Panc1 (cell line): ENCODE measurements at regions of chr15 and their contacts with region 1.

Region 1: GRCh38 chr15:77709135-77709886 is 76.6 kb upstream of the LINGO1 start:
- DNase-seq: no peak
- ATAC-seq: peak; percentile 29; the same call in 1 of the 2 replicates
- H3K4me3 ChIP-seq: no peak overlapping the region
- H3K27ac ChIP-seq: no peak overlapping the region
- H3K4me1 ChIP-seq: no peaks in the 10 kb centered on the region
- H3K27me3 ChIP-seq: no peaks in the 10 kb centered on the region
- CTCF ChIP-seq: no peak

Region 2: GRCh38 chr15:77266708-77267386 is 442.5 kb before region 1 on chr15:
- CTCF ChIA-PET with region 1: no interaction called
- POLR2A ChIA-PET with region 1: no interaction called
- in situ Hi-C with region 1: no loop called
- intact Hi-C with region 1: no loop called
- DNase-seq: no peak
- ATAC-seq: peak; percentile 99
- H3K4me3 ChIP-seq: no peak overlapping the region
- H3K27ac ChIP-seq: 0 out of 2 replicates have a peak overlapping the region, but pooled peaks have one; percentile 42
- H3K4me1 ChIP-seq: peaks cover 15% of the 10 kb centered on the region; the same call in 1 of the 2 replicates
- H3K27me3 ChIP-seq: no peaks in the 10 kb centered on the region
- CTCF ChIP-seq: no peak

Region 3: DNA sequence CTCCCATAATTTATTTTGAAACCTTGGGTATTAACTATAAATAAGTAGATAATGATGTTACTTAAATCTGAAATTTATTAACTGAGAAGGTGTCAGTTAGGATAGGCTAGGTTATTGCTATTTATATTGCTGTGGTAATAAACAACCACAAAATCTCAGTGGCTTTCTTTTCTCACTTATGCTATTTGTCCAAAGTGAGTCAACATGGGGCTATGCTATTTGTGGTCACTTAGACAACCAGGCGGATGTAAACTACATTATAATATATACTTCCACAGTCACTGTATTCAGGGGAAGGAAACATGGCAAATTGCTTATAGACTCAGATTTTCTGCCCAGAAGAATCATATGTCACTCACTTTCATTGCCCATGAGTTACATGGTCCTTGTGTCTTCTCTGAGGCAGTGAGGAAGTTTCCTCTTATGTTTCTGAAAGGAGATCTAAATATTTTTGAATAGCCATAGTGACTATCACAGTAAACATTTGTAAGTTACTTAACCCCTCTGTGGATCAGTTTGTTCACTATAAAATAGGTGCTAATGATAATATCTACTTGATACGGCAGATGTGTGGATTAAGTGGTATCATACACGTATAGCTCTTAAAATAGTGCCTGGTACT is 268.8 kb before region 1 on chr15:
- CTCF ChIA-PET with region 1: no interaction called
- POLR2A ChIA-PET with region 1: interaction called, 13 read pairs
- in situ Hi-C with region 1: no loop called
- intact Hi-C with region 1: no loop called
- DNase-seq: no peak
- ATAC-seq: peak; percentile 89
- H3K4me3 ChIP-seq: no peak overlapping the region
- H3K27ac ChIP-seq: no peak overlapping the region
- H3K4me1 ChIP-seq: peaks cover 19% of the 10 kb centered on the region; the same call in 1 of the 2 replicates
- H3K27me3 ChIP-seq: no peaks in the 10 kb centered on the region
- CTCF ChIP-seq: no peak

Region 4: DNA sequence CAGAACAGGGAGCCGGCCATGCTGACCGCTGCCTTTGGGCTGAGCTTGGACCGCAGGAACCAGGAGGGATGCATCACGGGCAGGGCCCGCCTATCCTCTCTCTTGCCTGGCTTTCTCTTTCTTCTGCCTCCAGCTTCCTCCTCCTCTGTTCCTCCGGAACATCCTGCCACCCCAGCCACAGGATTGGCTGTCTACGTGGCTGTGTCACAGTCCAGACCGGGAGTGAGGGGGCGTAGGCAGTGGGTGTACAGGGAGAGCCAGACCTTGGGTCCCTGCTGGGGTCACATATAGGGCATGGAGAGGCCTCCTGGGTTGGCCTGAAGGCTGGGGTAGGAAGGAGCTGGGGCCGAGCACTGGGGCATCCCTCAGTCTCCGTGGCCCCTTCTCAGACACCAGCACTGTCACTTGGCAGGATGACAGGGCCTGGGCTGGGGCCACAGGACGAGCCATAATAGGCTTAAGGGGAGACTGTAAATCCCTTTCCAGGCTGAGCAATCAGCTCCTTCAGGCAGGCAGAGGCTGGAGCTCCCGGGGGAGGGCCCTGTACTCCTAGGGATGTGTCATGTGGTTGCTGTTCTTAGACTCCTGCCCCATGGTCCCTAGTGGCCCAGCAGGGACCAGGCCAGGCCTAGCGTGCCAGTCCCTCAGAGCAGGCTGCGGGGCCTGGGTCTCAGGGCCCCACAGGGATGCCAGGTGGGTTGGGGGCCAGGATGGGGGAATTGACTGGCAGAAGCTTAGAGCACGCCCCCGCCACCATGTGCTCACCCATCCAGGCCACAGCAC is 102.0 kb before region 1 on chr15:
- CTCF ChIA-PET with region 1: no interaction called
- POLR2A ChIA-PET with region 1: no interaction called
- in situ Hi-C with region 1: no loop called
- intact Hi-C with region 1: no loop called
- DNase-seq: no peak
- ATAC-seq: peak; percentile 24; the same call in 1 of the 2 replicates
- H3K4me3 ChIP-seq: no peak overlapping the region
- H3K27ac ChIP-seq: peak overlapping the region; percentile 51; the same call in 1 of the 2 replicates
- H3K4me1 ChIP-seq: peaks cover 31% of the 10 kb centered on the region; the same call in 1 of the 2 replicates
- H3K27me3 ChIP-seq: no peaks in the 10 kb centered on the region
- CTCF ChIP-seq: no peak

Region 5: GRCh38 chr15:77786181-77786890 is 77.0 kb after region 1 on chr15:
- CTCF ChIA-PET with region 1: no interaction called
- POLR2A ChIA-PET with region 1: no interaction called
- in situ Hi-C with region 1: no loop called
- intact Hi-C with region 1: no loop called
- DNase-seq: no peak
- ATAC-seq: no peak
- H3K4me3 ChIP-seq: no peak overlapping the region
- H3K27ac ChIP-seq: no peak overlapping the region
- H3K4me1 ChIP-seq: no peaks in the 10 kb centered on the region
- H3K27me3 ChIP-seq: no peaks in the 10 kb centered on the region
- CTCF ChIP-seq: no peak